ENCODE measurements at regions of chr7 and their contacts with region 1.

Region 1: GRCh38 chr7:7566651-7567611 is at the start of gene MIOS:
- DNase-seq: peak; percentile 60 to 89 (median 77)
- H3K4me3 ChIP-seq: peak within 1 kb of the TSS; percentile 52 to 98 (median 83)
- H3K27ac ChIP-seq: peak within 1 kb of the TSS; percentile 24 to 97 (median 88)
- H3K27me3 ChIP-seq: no peaks in the 10 kb centered on the region
- CTCF ChIP-seq: peak in 13 of 56 donors; percentile 8 to 42 (median 25)
- total RNA-seq, gene MIOS: 22.0 to 49.3 (median 35.6) TPM

Region 2: GRCh38 chr7:7182156-7183060 is 384.5 kb before region 1 on chr7 and contains the start of gene C1GALT1:
- intact Hi-C with region 1: loop called (anchors 5 to 10 kb)
- DNase-seq: peak; percentile 91 to 98 (median 96)
- H3K4me3 ChIP-seq: peak within 1 kb of the TSS; percentile 58 to 98 (median 91)
- H3K27ac ChIP-seq: peak within 1 kb of the TSS; percentile 85 to 99 (median 98)
- H3K27me3 ChIP-seq: no peaks in the 10 kb centered on the region
- CTCF ChIP-seq: peak in 52 of 56 donors; percentile 7 to 68 (median 44)
- total RNA-seq, gene C1GALT1: 22.2 to 88.2 (median 37.1) TPM

Region 3: DNA sequence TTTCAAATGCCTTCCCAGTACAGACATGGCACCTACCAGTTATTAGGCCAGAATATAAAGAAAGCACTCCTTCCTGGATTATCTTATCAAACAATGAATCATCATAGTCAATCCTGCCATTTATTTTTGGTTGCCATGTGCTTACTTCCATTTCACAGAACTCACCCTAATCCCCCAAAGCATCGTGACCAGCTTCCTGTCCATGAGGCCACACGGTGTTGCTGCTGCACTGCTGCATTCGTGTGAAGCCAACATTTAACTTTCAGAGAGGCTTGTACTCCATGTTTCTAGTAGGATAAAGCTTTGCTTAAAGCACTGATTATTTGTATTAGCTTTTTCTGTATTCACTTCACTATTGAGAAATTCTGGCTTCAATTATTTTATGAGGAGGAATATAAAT is 45.7 kb before region 1 on chr7:
- intact Hi-C with region 1: no loop called
- DNase-seq: no peak
- H3K4me3 ChIP-seq: no peak overlapping the region
- H3K27ac ChIP-seq: no peak overlapping the region
- H3K27me3 ChIP-seq: no peaks in the 10 kb centered on the region
- CTCF ChIP-seq: no peak

Region 4: GRCh38 chr7:8295638-8296361 is 728.9 kb after region 1 on chr7:
- intact Hi-C with region 1: loop called in 1 of 2 experiments (anchors 10 kb)
- DNase-seq: peak in 2 of 10 donors; percentile 26 to 49
- H3K4me3 ChIP-seq: no peak overlapping the region
- H3K27ac ChIP-seq: no peak overlapping the region
- H3K27me3 ChIP-seq: no peaks in the 10 kb centered on the region
- CTCF ChIP-seq: peak; percentile 56 to 94 (median 86)

Measured in dorsolateral prefrontal cortex (tissue), 120 donors.